ENCODE measurements at regions of chr19 and their contacts with region 1.

Region 1: GRCh38 chr19:13117772-13118423 is at the start of gene NACC1:
- DNase-seq: peak; percentile 93
- ATAC-seq: peak; percentile 68
- H3K4me3 Mint-ChIP-seq: peak within 1 kb of the TSS; percentile 96
- H3K27ac Mint-ChIP-seq: peak within 1 kb of the TSS; percentile 98
- H3K4me1 Mint-ChIP-seq: peaks cover 52% of the 10 kb centered on the region
- H3K27me3 Mint-ChIP-seq: no peaks in the 10 kb centered on the region; the same call in 1 of the 2 replicates
- CTCF ChIP-seq: no peak
- total RNA-seq, gene NACC1: 212 to 237 TPM (median 213 TPM) in 3 replicates

Region 2: GRCh38 chr19:13104360-13104847 is 13.5 kb before region 1 on chr19:
- CTCF ChIA-PET with region 1: interaction called, 16 read pairs
- POLR2A ChIA-PET with region 1: interaction called, 7 read pairs
- DNase-seq: peak; percentile 82
- ATAC-seq: peak; percentile 57
- H3K4me3 Mint-ChIP-seq: no peak overlapping the region
- H3K27ac Mint-ChIP-seq: no peak overlapping the region; the same call in 1 of the 2 replicates
- H3K4me1 Mint-ChIP-seq: peaks cover 4% of the 10 kb centered on the region
- H3K27me3 Mint-ChIP-seq: peaks cover 30% of the 10 kb centered on the region
- CTCF ChIP-seq: peak; percentile 73

Region 3: DNA sequence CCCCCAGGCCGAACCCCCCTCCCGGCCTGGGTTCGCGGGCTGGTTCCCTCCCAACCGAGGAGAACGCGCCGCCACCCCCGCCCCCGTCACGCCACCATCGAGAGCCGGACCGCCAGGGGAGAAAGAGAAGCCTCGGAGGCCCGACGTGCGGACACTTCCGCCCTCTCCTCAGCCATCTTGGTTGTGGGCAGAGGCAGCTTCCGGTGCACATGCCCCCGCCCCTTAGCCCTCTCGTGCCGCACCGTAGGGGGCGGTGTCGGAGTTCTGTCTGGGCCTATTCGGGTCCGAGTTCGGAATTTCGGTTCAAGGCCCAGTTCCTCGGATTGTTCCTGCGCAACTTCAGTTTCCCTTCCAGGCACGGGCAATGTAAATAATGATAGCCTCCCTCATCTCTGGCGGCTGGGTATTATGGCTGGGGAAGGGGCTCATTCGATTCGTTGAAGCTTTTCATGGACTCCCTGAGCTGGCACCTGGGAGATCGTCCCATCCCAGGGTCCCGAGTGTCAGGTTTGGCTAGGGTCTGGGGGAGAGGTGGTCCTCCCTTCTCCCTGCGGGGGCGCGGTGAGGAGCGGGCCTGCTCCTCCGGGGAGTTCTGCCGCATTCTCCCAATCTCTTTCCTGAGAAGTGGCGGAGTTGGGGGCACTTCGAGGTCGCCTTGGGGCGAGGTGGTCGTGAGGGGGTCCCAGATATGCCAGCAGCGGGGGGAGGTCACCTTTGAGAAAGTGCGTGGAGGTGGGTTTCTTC is 32.5 kb after region 1 on chr19 and contains the starts of genes IER2 and STX10:
- CTCF ChIA-PET with region 1: interaction called, 10 read pairs
- POLR2A ChIA-PET with region 1: interaction called, 30 read pairs
- DNase-seq: peak; percentile 90
- ATAC-seq: peak; percentile 18
- H3K4me3 Mint-ChIP-seq: peak within 1 kb of the TSS; percentile 99
- H3K27ac Mint-ChIP-seq: peak within 1 kb of the TSS; percentile 99
- H3K4me1 Mint-ChIP-seq: peaks cover 13% of the 10 kb centered on the region
- H3K27me3 Mint-ChIP-seq: peaks cover 7% of the 10 kb centered on the region; the same call in 1 of the 2 replicates
- CTCF ChIP-seq: no peak
- total RNA-seq, gene IER2: 138 to 154 TPM (median 150 TPM) in 3 replicates
- total RNA-seq, gene STX10: 53.7 to 56.9 TPM (median 54.6 TPM) in 3 replicates

Measured in WTC11 (cell line).